Activated CD8-positive, alpha-beta T cell treated with anti-CD3 and anti-CD28 coated beads, Interleukin-2, amount 10 ng/mL, durations not matched to agents 7 days and 5 days (primary cell): ENCODE measurements at regions of chr13 and their contacts with region 1.

Region 1: GRCh38 chr13:77329133-77329910 is 2.4 kb upstream of the MYCBP2 start:
- DNase-seq: peak; percentile 97
- ATAC-seq: peak; percentile 75
- H3K4me3 Mint-ChIP-seq: peak overlapping the region; percentile 98
- H3K27ac Mint-ChIP-seq: peak overlapping the region; percentile 97
- H3K4me1 Mint-ChIP-seq: peaks cover 37% of the 10 kb centered on the region
- H3K27me3 Mint-ChIP-seq: peaks cover 1% of the 10 kb centered on the region

Region 2: GRCh38 chr13:77026818-77027585 is 302.3 kb before region 1 on chr13 and contains the start of gene FBXL3:
- CTCF ChIA-PET with region 1: interaction called, 5 read pairs
- POLR2A ChIA-PET with region 1: interaction called, 19 read pairs
- DNase-seq: peak; percentile 86
- ATAC-seq: peak; percentile 80
- H3K4me3 Mint-ChIP-seq: peak within 1 kb of the TSS; percentile 94
- H3K27ac Mint-ChIP-seq: peak within 1 kb of the TSS; percentile 98
- H3K4me1 Mint-ChIP-seq: peaks cover 54% of the 10 kb centered on the region
- H3K27me3 Mint-ChIP-seq: no peaks in the 10 kb centered on the region
- total RNA-seq, gene FBXL3: 35.6 to 38.0 TPM

Region 3: GRCh38 chr13:77316430-77316829 is 12.9 kb before region 1 on chr13:
- CTCF ChIA-PET with region 1: interaction called, 11 read pairs
- POLR2A ChIA-PET with region 1: interaction called, 5 read pairs
- DNase-seq: no peak
- ATAC-seq: no peak
- H3K4me3 Mint-ChIP-seq: no peak overlapping the region
- H3K27ac Mint-ChIP-seq: no peak overlapping the region
- H3K4me1 Mint-ChIP-seq: peaks cover 67% of the 10 kb centered on the region
- H3K27me3 Mint-ChIP-seq: no peaks in the 10 kb centered on the region